GM12878 (cell line): ENCODE measurements at regions of chr9 and their contacts with region 1.

Region 1: DNA sequence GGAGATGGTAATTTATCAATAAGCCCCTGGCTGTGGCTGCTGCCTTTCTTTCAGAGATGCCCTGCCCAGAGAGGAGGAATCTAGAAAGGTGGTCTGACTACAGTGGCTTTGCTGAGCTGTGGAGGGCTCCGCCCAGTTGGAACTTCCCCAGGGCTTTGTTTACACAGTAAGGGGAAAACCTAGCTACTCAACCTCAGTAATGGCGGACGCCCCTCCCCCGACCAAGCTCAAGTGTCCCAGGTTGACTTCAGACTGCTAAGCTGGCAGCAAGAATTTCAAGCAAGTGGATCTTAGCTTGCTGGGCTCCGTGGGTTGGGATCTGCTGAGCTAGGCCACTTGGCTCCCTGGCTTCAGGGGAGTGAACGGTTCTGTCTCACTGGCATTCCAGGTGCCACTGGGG is 865.4 kb upstream of the ACO1 start:
- DNase-seq: peak; percentile 21
- ATAC-seq: peak; percentile 97
- H3K4me3 ChIP-seq: no peak overlapping the region
- H3K27ac ChIP-seq: no peak overlapping the region
- H3K4me1 ChIP-seq: peaks cover 5% of the 10 kb centered on the region
- H3K27me3 ChIP-seq: no peaks in the 10 kb centered on the region
- CTCF ChIP-seq: no peak
- EP300 ChIP-seq: no peak
- POLR2A ChIP-seq: no peak
- RAD21 ChIP-seq: no peak

Region 2: DNA sequence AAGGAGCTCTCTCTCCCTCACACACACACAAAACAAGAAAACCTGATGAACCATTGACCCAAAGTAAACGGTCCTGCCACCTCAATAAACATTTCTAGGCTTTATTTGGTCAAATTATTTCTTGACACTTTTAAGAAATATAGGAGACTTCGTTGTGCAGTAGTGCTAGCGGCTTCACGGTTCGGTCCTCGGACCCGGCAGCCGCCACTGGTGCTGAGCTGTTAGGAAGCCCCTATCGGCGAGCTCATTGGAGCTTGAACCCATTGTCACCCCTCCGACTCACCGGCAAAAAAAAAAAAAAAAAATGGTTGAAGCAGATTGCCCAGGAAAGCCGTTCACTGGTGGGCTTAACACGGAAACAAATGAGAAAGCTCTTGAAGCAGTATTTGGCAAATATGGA is 830.2 kb before region 1 on chr9:
- CTCF ChIA-PET with region 1: no interaction called
- POLR2A ChIA-PET with region 1: no interaction called
- RAD21 ChIA-PET with region 1: no interaction called
- SMC1A ChIA-PET with region 1: no interaction called
- in situ Hi-C with region 1: no loop called
- intact Hi-C with region 1: no loop called
- DNase-seq: no peak
- ATAC-seq: no peak
- H3K4me3 ChIP-seq: no peak overlapping the region
- H3K27ac ChIP-seq: no peak overlapping the region
- H3K4me1 ChIP-seq: no peaks in the 10 kb centered on the region
- H3K27me3 ChIP-seq: no peaks in the 10 kb centered on the region
- CTCF ChIP-seq: no peak
- EP300 ChIP-seq: no peak
- POLR2A ChIP-seq: no peak
- RAD21 ChIP-seq: no peak

Region 3: DNA sequence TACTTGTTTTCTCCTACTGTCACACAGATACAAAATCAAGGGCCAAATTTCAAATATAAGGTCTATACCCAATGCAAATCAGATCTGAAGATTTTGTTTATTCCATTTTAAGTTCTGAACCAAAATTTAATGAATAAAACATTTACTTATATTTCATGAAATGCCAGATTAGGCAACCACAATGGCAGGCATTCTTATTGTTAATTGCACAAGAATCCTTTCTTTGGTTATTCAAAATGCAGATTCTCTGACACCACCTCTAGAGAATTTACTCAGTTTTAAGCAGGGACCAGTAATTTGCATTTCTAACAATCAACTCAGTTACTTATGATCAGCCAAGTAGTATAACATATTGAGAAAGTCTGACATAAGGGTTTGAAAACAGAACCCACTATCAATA is 106.9 kb before region 1 on chr9:
- CTCF ChIA-PET with region 1: no interaction called
- POLR2A ChIA-PET with region 1: no interaction called
- RAD21 ChIA-PET with region 1: no interaction called
- SMC1A ChIA-PET with region 1: no interaction called
- in situ Hi-C with region 1: no loop called
- intact Hi-C with region 1: no loop called
- DNase-seq: no peak
- ATAC-seq: no peak
- H3K4me3 ChIP-seq: no peak overlapping the region
- H3K27ac ChIP-seq: no peak overlapping the region
- H3K4me1 ChIP-seq: no peaks in the 10 kb centered on the region
- H3K27me3 ChIP-seq: no peaks in the 10 kb centered on the region
- CTCF ChIP-seq: no peak
- EP300 ChIP-seq: no peak
- POLR2A ChIP-seq: no peak
- RAD21 ChIP-seq: no peak

Region 4: DNA sequence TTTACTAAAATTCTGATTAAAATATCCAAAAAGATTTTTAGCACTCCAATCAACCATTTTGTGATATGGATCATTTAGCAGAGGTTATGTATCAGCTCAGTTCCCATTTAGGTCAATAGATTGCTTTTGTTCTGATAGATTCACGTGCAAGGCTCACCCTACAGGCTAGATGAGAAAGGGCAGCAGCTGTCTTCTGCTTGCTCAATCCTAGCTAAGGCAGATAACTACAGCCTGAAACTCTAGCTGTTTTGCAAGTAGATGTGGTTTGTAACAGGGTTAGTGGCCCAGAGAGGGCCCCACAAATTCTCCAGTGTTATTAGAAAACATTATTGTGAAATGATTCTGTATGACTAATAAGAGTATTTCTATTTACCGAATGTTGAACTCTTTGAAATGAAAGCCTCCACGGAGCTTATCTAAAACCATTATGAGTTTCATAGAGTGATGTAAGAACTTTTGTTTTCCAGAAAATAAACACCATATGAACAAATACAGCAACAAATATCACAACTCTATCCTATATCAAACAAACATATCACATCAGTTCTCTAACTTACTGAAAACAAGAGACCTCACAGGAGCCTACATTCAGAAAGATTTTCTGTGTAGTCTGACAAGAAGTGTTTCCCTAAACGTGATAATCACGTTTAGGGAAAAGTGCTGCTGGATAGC is 23.5 kb after region 1 on chr9:
- CTCF ChIA-PET with region 1: interaction called, 5 read pairs
- POLR2A ChIA-PET with region 1: no interaction called
- RAD21 ChIA-PET with region 1: interaction called, 10 read pairs
- SMC1A ChIA-PET with region 1: interaction called, 11 read pairs
- in situ Hi-C with region 1: no loop called
- intact Hi-C with region 1: no loop called
- DNase-seq: peak; percentile 26
- ATAC-seq: peak; percentile 99
- H3K4me3 ChIP-seq: no peak overlapping the region
- H3K27ac ChIP-seq: no peak overlapping the region
- H3K4me1 ChIP-seq: peaks cover 4% of the 10 kb centered on the region; the same call in 1 of the 2 replicates
- H3K27me3 ChIP-seq: no peaks in the 10 kb centered on the region
- CTCF ChIP-seq: peak; percentile 54 to 57 (median 56); a peak in 5 of 6 replicates
- EP300 ChIP-seq: peak; percentile 37 to 78; a peak in 2 of 4 replicates
- POLR2A ChIP-seq: no peak
- RAD21 ChIP-seq: peak; percentile 75